Lower leg skin (tissue), 4 donors: ENCODE measurements at regions of chr12 and their contacts with region 1.

Region 1: GRCh38 chr12:54360717-54361456 is 3.4 kb downstream of the GPR84 start:
- DNase-seq: no peak
- H3K4me3 ChIP-seq: no peak overlapping the region
- CTCF ChIP-seq: peak in 1 of 3 donors; percentile 70
- POLR2A ChIP-seq: no peak

Region 2: GRCh38 chr12:54214553-54215406 is 146.1 kb before region 1 on chr12:
- intact Hi-C with region 1: loop called (anchors 5 kb)
- DNase-seq: peak; percentile 84 to 97
- H3K4me3 ChIP-seq: no peak overlapping the region
- CTCF ChIP-seq: peak in 1 of 3 donors; percentile 91
- POLR2A ChIP-seq: no peak

Region 3: DNA sequence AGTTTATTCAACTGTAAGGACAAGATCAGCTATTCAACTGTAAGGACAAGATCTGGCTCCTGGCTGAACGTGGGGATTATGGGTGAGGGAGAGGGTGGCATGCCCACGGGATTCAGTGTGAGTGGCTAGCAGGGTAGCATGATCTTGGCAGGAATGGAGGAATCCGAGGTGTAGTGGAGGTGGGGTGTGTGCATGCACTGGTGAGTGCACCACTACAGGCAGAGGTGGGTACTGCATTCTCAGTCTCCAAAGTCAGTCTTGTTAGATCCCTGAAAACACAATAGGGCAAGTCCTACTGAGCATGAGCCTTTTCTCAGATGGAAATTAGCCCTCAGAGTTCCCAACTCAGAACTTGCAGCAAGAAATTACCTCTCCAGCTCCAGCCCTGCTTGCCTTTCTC is 319.5 kb after region 1 on chr12:
- intact Hi-C with region 1: no loop called
- DNase-seq: no peak
- H3K4me3 ChIP-seq: no peak overlapping the region
- CTCF ChIP-seq: no peak
- POLR2A ChIP-seq: no peak